ENCODE measurements at regions of chr9 and their contacts with region 1.

Region 1: GRCh38 chr9:116901260-116901659 is 214.2 kb downstream of the TRIM32 start:
- DNase-seq: peak in 1 of 2 experiments; percentile 79
- H3K4me3 ChIP-seq: no peak overlapping the region
- H3K27ac ChIP-seq: no peak overlapping the region
- H3K4me1 ChIP-seq: 0 out of 2 replicates have a peak, but pooled peaks cover 12% of the 10 kb centered on the region
- H3K27me3 ChIP-seq: no peaks in the 10 kb centered on the region
- CTCF ChIP-seq: no peak

Region 2: DNA sequence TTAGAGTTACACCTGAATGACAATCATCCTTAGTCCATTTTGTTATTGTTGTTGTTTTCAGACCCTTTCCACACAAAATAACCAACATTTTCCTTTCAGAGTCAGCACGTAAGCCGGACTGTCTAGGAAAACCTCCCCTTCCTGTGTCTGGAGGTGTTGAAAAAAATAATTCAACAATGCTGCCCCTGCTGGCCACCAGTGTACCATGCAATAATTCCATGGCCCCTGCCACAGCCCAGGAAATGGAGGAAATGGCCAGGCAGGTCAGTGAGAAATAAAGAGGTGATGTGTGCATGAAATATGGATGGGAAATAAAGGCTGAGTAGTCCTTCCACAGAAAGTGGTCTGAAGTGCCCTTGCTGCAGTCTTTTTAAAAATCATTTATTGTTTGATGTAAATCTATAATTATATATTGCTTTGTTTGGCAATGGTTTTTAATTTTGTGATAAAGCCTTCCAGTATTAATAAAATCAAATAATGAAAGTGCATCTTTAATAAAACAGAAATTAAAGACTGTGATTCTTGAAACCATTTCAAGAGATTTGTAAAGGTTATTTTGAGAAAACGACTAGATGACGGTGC is 900.4 kb before region 1 on chr9:
- CTCF ChIA-PET with region 1: no interaction called
- POLR2A ChIA-PET with region 1: no interaction called
- intact Hi-C with region 1: no loop called
- DNase-seq: no peak
- H3K4me3 ChIP-seq: no peak overlapping the region
- H3K27ac ChIP-seq: no peak overlapping the region
- H3K4me1 ChIP-seq: peaks cover 69% of the 10 kb centered on the region
- H3K27me3 ChIP-seq: no peaks in the 10 kb centered on the region
- CTCF ChIP-seq: peak; percentile 53; the same call in 1 of the 2 replicates

Region 3: DNA sequence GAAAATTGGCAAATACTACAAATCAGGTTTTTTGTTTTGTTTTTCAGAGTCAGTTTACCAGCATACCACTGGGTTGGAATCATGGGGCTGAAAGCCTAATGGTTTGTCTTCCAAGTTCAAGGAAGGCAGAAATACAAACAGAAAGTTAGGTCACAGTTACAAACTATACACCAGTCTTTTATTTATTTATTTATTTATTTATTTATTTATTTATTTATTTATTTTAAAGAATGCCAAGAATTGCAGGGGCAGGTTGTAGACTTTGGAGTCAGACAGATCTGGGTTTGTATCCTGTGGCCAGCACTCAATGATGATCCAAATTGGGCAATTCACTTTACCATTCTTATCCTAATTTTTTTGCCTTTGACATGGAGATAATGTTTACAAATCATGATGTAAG is 159.7 kb after region 1 on chr9:
- CTCF ChIA-PET with region 1: interaction called, 32 read pairs
- POLR2A ChIA-PET with region 1: no interaction called
- intact Hi-C with region 1: no loop called
- DNase-seq: no peak
- H3K4me3 ChIP-seq: no peak overlapping the region
- H3K27ac ChIP-seq: no peak overlapping the region
- H3K4me1 ChIP-seq: no peaks in the 10 kb centered on the region
- H3K27me3 ChIP-seq: 0 out of 2 replicates have a peak, but pooled peaks cover 8% of the 10 kb centered on the region
- CTCF ChIP-seq: no peak

Region 4: GRCh38 chr9:118230319-118230718 is 1329.1 kb after region 1 on chr9:
- CTCF ChIA-PET with region 1: interaction called, 18 read pairs
- POLR2A ChIA-PET with region 1: no interaction called
- intact Hi-C with region 1: no loop called
- DNase-seq: no peak
- H3K4me3 ChIP-seq: no peak overlapping the region
- H3K27ac ChIP-seq: no peak overlapping the region
- H3K4me1 ChIP-seq: no peaks in the 10 kb centered on the region
- H3K27me3 ChIP-seq: no peaks in the 10 kb centered on the region
- CTCF ChIP-seq: no peak

Measured in PC-9 (cell line).